ENCODE measurements at regions of chr4 and their contacts with region 1.

Region 1: DNA sequence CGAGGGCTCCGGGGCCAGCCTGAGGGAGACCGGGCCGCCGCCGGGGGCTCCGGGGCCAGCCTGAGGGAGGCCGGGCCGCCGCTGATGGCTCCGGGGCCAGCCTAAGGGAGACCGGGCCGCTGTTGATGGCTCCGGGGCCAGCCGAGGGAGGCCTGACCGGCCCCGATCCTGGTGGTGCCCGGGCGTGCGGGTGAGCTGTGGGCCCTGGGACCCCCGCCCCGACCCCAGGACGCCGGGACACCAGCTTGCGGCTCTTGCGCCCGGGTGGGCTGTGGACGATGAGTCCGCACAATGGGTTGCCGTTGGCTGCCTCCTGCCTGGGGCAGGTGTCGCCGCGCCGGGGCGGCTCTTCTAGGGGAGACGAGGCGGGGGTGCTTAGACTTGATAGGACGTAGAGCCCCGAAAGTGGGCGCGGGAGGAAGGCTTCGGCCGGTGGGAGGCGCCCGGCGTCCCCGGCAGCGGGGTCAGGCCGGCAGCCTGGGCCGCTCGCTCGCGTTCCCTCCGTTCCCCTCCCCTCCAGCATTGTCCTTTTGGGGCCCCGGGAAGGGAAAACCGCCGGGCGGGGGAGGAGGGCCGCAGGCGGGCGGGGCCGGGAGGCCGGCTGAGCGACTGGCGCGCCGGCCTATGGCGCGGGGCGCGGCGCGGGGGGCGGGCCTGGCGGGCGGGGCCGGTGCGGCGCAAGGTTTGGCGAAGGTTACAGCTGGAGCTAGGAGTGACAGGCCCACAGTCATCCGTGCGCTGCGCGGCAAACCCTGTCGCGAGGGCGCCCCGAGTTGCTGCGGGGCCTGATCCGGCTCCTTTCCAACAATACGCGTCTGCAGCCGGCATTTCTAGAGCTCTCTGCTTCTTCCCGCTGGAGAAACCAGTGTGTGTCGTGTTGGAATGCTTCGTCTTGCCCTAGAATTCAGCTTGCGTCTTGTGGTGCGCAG is 790 bp downstream of the KIAA0232 start:
- DNase-seq: peak; percentile 80 to 92 (median 87)
- ATAC-seq: peak; percentile 85
- H3K4me3 ChIP-seq: peak overlapping the region; percentile 85
- H3K4me3 Mint-ChIP-seq: peak overlapping the region; percentile 82 to 88 (median 86)
- H3K27ac ChIP-seq: peak overlapping the region; percentile 97
- H3K27ac Mint-ChIP-seq: peak overlapping the region; percentile 64 to 93 (median 84)
- H3K4me1 ChIP-seq: peaks cover 20 to 21% of the 10 kb centered on the region in 2 donors
- H3K4me1 Mint-ChIP-seq: peaks cover 39 to 75% (median 68%) of the 10 kb centered on the region in 7 donors
- H3K27me3 ChIP-seq: no peaks in the 10 kb centered on the region
- H3K27me3 Mint-ChIP-seq: no peaks in the 10 kb centered on the region

Region 2: GRCh38 chr4:6574747-6575502 is 208.4 kb before region 1 on chr4 and contains the start of gene MAN2B2:
- CTCF ChIA-PET with region 1: no interaction called
- POLR2A ChIA-PET with region 1: no interaction called
- intact Hi-C with region 1: loop called (anchors 2 to 10 kb)
- DNase-seq: peak; percentile 68 to 92 (median 75)
- ATAC-seq: peak; percentile 96
- H3K4me3 ChIP-seq: peak within 1 kb of the TSS; percentile 92
- H3K4me3 Mint-ChIP-seq: peak within 1 kb of the TSS; percentile 84 to 94 (median 90)
- H3K27ac ChIP-seq: peak within 1 kb of the TSS; percentile 83
- H3K27ac Mint-ChIP-seq: peak within 1 kb of the TSS; percentile 68 to 91 (median 84)
- H3K4me1 ChIP-seq: peaks cover 5 to 9% of the 10 kb centered on the region in 2 donors
- H3K4me1 Mint-ChIP-seq: peaks cover 6 to 13% (median 8%) of the 10 kb centered on the region in 7 donors
- H3K27me3 ChIP-seq: no peaks in the 10 kb centered on the region
- H3K27me3 Mint-ChIP-seq: peaks cover 0 to 17% (median 0%) of the 10 kb centered on the region in 5 donors
- total RNA-seq, gene MAN2B2: 28.7 to 56.2 (median 39.4) TPM

Region 3: DNA sequence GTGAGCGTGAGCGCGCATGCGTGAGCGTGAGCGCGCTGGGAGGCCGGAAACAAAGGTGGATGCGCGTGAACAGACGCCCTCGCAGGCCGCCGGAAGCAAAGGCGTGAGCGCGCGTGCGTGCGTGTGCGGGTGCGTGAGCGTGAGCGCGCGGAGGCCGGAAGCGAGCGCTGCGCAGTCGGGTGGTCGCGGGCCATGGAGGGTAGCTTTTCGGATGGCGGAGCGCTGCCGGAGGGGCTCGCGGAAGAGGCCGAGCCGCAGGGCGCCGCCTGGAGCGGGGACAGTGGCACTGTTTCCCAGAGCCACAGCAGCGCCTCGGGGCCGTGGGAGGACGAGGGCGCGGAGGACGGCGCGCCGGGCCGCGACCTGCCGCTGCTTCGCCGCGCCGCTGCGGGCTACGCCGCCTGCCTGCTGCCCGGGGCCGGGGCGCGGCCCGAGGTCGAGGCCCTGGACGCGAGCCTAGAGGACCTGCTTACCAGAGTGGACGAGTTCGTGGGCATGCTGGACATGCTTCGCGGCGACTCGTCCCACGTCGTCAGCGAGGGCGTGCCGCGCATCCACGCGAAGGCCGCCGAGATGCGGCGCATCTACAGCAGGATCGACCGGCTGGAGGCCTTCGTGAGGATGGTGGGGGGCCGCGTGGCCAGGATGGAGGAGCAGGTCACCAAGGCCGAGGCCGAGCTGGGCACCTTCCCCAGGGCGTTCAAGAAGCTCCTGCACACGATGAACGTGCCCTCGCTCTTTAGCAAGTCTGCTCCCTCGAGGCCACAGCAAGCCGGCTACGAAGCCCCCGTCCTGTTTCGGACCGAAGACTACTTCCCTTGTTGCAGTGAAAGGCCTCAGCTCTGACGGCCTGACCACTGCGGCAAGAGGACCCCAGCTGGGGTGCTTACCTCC is 67.1 kb before region 1 on chr4 and contains the start of gene BLOC1S4:
- CTCF ChIA-PET with region 1: interaction called, 6 read pairs
- POLR2A ChIA-PET with region 1: interaction called, 23 read pairs
- intact Hi-C with region 1: loop called (anchors 1 kb)
- DNase-seq: peak; percentile 86 to 95 (median 91)
- ATAC-seq: peak; percentile 92
- H3K4me3 ChIP-seq: peak within 1 kb of the TSS; percentile 86
- H3K4me3 Mint-ChIP-seq: peak within 1 kb of the TSS; percentile 89 to 99 (median 95)
- H3K27ac ChIP-seq: peak within 1 kb of the TSS; percentile 90
- H3K27ac Mint-ChIP-seq: peak within 1 kb of the TSS; percentile 94 to 100 (median 97)
- H3K4me1 ChIP-seq: peaks cover 19 to 20% of the 10 kb centered on the region in 2 donors
- H3K4me1 Mint-ChIP-seq: peaks cover 22 to 52% (median 36%) of the 10 kb centered on the region in 7 donors
- H3K27me3 ChIP-seq: no peaks in the 10 kb centered on the region
- H3K27me3 Mint-ChIP-seq: peaks cover 0 to 8% (median 0%) of the 10 kb centered on the region in 5 donors
- total RNA-seq, gene BLOC1S4: 18.7 to 45.9 (median 25.0) TPM

Region 4: DNA sequence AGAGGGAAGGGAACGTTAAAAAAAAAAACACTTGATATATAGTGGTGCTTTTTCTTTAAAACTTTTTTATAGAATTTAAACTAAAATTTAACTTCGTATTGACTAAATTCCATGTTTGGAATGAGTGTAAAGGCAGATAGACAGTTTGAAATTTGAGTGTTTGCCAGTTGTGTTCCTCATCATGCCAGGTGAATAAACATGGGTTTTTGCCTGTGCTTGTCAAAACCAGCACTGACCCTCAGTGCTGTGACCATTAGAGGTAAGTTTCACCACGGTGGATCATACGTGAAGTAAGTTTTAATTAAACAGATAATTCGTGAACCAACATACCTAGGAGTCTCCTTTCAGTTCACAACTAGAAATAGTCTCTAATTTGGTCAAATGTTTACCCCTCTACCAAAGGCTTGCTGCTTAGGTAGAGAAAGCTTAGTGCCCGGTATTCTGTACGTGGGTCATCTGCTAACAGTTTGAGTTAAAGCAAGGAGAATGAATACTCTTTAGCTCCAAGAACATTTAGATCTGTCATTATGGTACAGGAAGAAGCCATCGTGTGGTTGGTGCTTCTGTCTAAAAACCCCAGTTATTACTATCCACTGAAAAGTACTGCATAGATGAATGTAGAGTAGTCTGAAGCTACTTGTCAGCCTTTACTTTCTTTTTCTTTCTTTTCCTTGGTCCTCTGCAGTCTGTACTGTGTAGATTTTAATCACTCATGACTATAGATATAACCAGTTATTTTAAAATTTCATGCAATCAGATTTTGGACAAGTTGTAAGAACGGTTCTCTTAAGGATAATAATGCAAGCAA is 31.9 kb after region 1 on chr4:
- CTCF ChIA-PET with region 1: no interaction called
- POLR2A ChIA-PET with region 1: no interaction called
- intact Hi-C with region 1: no loop called
- DNase-seq: no peak
- ATAC-seq: no peak
- H3K4me3 ChIP-seq: no peak overlapping the region
- H3K4me3 Mint-ChIP-seq: no peak overlapping the region
- H3K27ac ChIP-seq: no peak overlapping the region
- H3K27ac Mint-ChIP-seq: peak overlapping the region in 1 of 9 donors; percentile 16
- H3K4me1 ChIP-seq: no peaks in the 10 kb centered on the region
- H3K4me1 Mint-ChIP-seq: peaks cover 11 to 41% (median 30%) of the 10 kb centered on the region in 7 donors
- H3K27me3 ChIP-seq: no peaks in the 10 kb centered on the region
- H3K27me3 Mint-ChIP-seq: no peaks in the 10 kb centered on the region

Region 5: GRCh38 chr4:6909073-6909965 is 126.0 kb after region 1 on chr4 and contains the start of gene TBC1D14:
- CTCF ChIA-PET with region 1: interaction called, 5 read pairs
- POLR2A ChIA-PET with region 1: interaction called, 3 read pairs
- intact Hi-C with region 1: loop called (anchors 1 kb)
- DNase-seq: peak; percentile 84 to 93 (median 90)
- ATAC-seq: peak; percentile 94
- H3K4me3 ChIP-seq: peak within 1 kb of the TSS; percentile 70
- H3K4me3 Mint-ChIP-seq: peak within 1 kb of the TSS; percentile 89 to 95 (median 91)
- H3K27ac ChIP-seq: peak within 1 kb of the TSS; percentile 97
- H3K27ac Mint-ChIP-seq: peak within 1 kb of the TSS; percentile 81 to 94 (median 91)
- H3K4me1 ChIP-seq: peaks cover 20 to 38% of the 10 kb centered on the region in 2 donors
- H3K4me1 Mint-ChIP-seq: peaks cover 45 to 60% (median 55%) of the 10 kb centered on the region in 7 donors
- H3K27me3 ChIP-seq: no peaks in the 10 kb centered on the region
- H3K27me3 Mint-ChIP-seq: peaks cover 0 to 2% (median 0%) of the 10 kb centered on the region in 5 donors
- total RNA-seq, gene TBC1D14: 42.9 to 72.2 (median 58.3) TPM

Region 6: GRCh38 chr4:7067452-7068278 is 284.3 kb after region 1 on chr4 and contains the start of gene GRPEL1:
- CTCF ChIA-PET with region 1: interaction called, 3 read pairs
- POLR2A ChIA-PET with region 1: interaction called, 7 read pairs
- intact Hi-C with region 1: loop called (anchors 1 kb)
- DNase-seq: peak; percentile 100
- ATAC-seq: peak; percentile 96
- H3K4me3 ChIP-seq: peak within 1 kb of the TSS; percentile 95
- H3K4me3 Mint-ChIP-seq: peak within 1 kb of the TSS; percentile 89 to 98 (median 95)
- H3K27ac ChIP-seq: peak within 1 kb of the TSS; percentile 88
- H3K27ac Mint-ChIP-seq: peak within 1 kb of the TSS; percentile 91 to 98 (median 96)
- H3K4me1 ChIP-seq: peaks cover 27% of the 10 kb centered on the region in 2 donors
- H3K4me1 Mint-ChIP-seq: peaks cover 35 to 70% (median 49%) of the 10 kb centered on the region in 7 donors
- H3K27me3 ChIP-seq: no peaks in the 10 kb centered on the region
- H3K27me3 Mint-ChIP-seq: peaks cover 0 to 13% (median 0%) of the 10 kb centered on the region in 5 donors
- total RNA-seq, gene GRPEL1: 34.5 to 53.3 (median 49.1) TPM

Region 7: GRCh38 chr4:8440492-8441341 is 1657.4 kb after region 1 on chr4 and contains the starts of genes ACOX3 and TRMT44:
- CTCF ChIA-PET with region 1: no interaction called
- POLR2A ChIA-PET with region 1: no interaction called
- intact Hi-C with region 1: loop called in 1 of 2 experiments (anchors 2 kb)
- DNase-seq: peak; percentile 89 to 100 (median 97)
- ATAC-seq: peak; percentile 97
- H3K4me3 ChIP-seq: peak within 1 kb of the TSS; percentile 92
- H3K4me3 Mint-ChIP-seq: peak within 1 kb of the TSS; percentile 93 to 100 (median 96)
- H3K27ac ChIP-seq: peak within 1 kb of the TSS; percentile 89
- H3K27ac Mint-ChIP-seq: peak within 1 kb of the TSS; percentile 98 to 100 (median 99)
- H3K4me1 ChIP-seq: peaks cover 31 to 37% of the 10 kb centered on the region in 2 donors
- H3K4me1 Mint-ChIP-seq: peaks cover 62 to 89% (median 81%) of the 10 kb centered on the region in 7 donors
- H3K27me3 ChIP-seq: no peaks in the 10 kb centered on the region
- H3K27me3 Mint-ChIP-seq: peaks cover 0 to 2% (median 0%) of the 10 kb centered on the region in 5 donors
- total RNA-seq, gene ACOX3: 10.9 to 20.5 (median 14.8) TPM
- total RNA-seq, gene TRMT44: 28.5 to 33.7 (median 29.6) TPM